PC-9 (cell line): ENCODE measurements at regions of chr2 and their contacts with region 1.

Region 1: DNA sequence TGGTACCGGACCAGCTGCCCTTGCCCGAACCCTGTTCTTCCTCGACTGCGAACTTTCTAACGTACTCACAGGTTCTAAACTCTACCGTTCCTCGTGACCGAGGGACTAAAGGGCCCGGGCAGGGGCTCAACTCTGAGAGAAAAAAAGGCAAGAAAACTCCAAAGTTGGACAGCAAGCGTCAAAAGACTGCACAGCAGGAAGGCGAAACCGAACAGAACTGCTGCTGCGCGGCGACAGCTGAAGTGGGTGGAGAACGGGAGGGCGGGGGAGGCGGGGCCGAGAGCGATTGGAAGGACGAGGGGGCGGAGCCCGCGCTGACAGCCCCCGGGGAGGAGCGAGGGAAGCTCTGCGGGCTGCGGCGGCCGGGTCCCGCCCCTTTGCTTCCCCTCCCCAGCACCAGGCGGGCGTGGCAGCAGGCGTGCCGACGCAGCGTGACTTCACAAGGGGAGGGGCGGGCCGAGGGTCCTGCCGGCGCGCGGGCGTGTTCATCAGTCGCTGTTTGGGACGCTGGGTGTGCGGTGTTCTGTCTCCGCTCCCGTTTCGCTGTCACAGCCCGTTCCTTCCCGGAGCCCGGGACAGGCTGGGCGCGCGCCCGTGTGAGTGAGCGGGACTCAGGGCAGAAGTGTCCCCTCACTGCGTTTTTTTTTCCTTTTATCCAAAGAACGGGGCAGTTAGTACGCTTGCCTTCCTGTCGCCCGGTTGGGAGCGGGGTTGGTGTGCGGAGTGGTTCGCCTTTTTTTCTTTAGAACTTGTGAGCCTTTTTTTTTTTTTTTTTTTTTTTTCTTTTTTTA is at the start of gene NABP1:
- DNase-seq: peak; percentile 79 to 95
- H3K4me3 ChIP-seq: peak within 1 kb of the TSS; percentile 86
- H3K27ac ChIP-seq: peak within 1 kb of the TSS; percentile 98
- H3K4me1 ChIP-seq: peaks cover 32% of the 10 kb centered on the region
- H3K27me3 ChIP-seq: no peaks in the 10 kb centered on the region
- CTCF ChIP-seq: no peak
- total RNA-seq, gene NABP1: 39.0 and 46.5 TPM in 2 replicates

Region 2: DNA sequence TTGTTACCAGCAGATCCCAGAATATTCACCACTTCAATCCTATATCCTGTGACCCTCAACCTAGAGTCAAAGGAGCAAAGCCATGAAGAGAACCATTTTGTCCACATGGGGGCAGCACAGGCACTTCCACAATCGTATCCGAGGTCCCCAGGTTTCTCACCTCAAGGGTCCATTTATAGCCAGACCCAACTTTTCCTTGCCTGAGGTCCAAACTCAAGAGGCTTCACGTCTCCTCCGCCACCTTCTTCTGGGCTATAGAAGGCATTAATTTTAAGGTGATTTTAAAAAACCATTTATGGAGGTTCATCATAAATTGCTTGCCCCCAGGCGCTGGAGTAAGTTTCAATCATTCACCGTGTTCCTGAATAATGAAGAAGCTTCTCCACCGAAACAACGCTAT is 111.5 kb before region 1 on chr2:
- CTCF ChIA-PET with region 1: no interaction called
- POLR2A ChIA-PET with region 1: no interaction called
- intact Hi-C with region 1: loop called (anchors 1 kb)
- DNase-seq: peak; percentile 48 to 63
- H3K4me3 ChIP-seq: no peak overlapping the region
- H3K27ac ChIP-seq: peak overlapping the region; percentile 63
- H3K4me1 ChIP-seq: peaks cover 46% of the 10 kb centered on the region
- H3K27me3 ChIP-seq: no peaks in the 10 kb centered on the region
- CTCF ChIP-seq: peak; percentile 77

Region 3: DNA sequence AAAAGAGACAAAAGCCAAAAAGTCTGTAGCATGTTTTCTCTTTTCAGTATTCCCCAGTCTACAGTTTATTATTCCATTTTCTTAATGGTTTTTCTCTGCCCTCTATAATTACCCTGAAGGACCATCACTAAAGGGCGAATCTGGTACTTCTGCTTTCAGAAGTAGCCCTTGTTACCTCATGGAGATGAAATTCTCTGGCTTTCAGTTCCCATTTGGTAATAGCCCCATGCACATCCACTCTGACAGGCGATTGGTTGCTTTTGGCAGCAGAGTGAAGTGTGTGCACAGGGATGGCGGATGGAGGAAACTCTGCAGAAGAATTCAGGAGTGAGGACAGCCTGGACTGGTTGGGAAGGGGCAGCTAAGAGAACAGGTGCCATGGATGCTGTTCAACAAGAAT is 66.2 kb before region 1 on chr2:
- CTCF ChIA-PET with region 1: no interaction called
- POLR2A ChIA-PET with region 1: interaction called, 11 read pairs
- intact Hi-C with region 1: no loop called
- DNase-seq: no peak
- H3K4me3 ChIP-seq: no peak overlapping the region
- H3K27ac ChIP-seq: no peak overlapping the region
- H3K4me1 ChIP-seq: no peaks in the 10 kb centered on the region
- H3K27me3 ChIP-seq: no peaks in the 10 kb centered on the region
- CTCF ChIP-seq: no peak

Region 4: GRCh38 chr2:191637182-191638078 is 40.4 kb before region 1 on chr2:
- CTCF ChIA-PET with region 1: interaction called, 5 read pairs
- POLR2A ChIA-PET with region 1: interaction called, 61 read pairs
- intact Hi-C with region 1: loop called (anchors 1 kb)
- DNase-seq: peak in 1 of 2 experiments; percentile 91
- H3K4me3 ChIP-seq: peak overlapping the region; percentile 47
- H3K27ac ChIP-seq: peak overlapping the region; percentile 100
- H3K4me1 ChIP-seq: peaks cover 72% of the 10 kb centered on the region
- H3K27me3 ChIP-seq: no peaks in the 10 kb centered on the region
- CTCF ChIP-seq: no peak

Region 5: GRCh38 chr2:193187816-193188215 is 1510.0 kb after region 1 on chr2:
- CTCF ChIA-PET with region 1: no interaction called
- POLR2A ChIA-PET with region 1: interaction called, 10 read pairs
- intact Hi-C with region 1: no loop called
- DNase-seq: no peak
- H3K4me3 ChIP-seq: peak overlapping the region; percentile 46
- H3K27ac ChIP-seq: no peak overlapping the region
- H3K4me1 ChIP-seq: no peaks in the 10 kb centered on the region
- H3K27me3 ChIP-seq: no peaks in the 10 kb centered on the region
- CTCF ChIP-seq: no peak